ENCODE measurements at regions of chr17 and their contacts with region 1.

Region 1: GRCh38 chr17:19641687-19642372 is 6.7 kb upstream of the ALDH3A2 start:
- DNase-seq: peak; percentile 77
- H3K4me3 Mint-ChIP-seq: no peak overlapping the region
- H3K27ac Mint-ChIP-seq: no peak overlapping the region
- H3K4me1 Mint-ChIP-seq: peaks cover 36% of the 10 kb centered on the region
- H3K27me3 Mint-ChIP-seq: no peaks in the 10 kb centered on the region
- CTCF ChIP-seq: no peak

Region 2: DNA sequence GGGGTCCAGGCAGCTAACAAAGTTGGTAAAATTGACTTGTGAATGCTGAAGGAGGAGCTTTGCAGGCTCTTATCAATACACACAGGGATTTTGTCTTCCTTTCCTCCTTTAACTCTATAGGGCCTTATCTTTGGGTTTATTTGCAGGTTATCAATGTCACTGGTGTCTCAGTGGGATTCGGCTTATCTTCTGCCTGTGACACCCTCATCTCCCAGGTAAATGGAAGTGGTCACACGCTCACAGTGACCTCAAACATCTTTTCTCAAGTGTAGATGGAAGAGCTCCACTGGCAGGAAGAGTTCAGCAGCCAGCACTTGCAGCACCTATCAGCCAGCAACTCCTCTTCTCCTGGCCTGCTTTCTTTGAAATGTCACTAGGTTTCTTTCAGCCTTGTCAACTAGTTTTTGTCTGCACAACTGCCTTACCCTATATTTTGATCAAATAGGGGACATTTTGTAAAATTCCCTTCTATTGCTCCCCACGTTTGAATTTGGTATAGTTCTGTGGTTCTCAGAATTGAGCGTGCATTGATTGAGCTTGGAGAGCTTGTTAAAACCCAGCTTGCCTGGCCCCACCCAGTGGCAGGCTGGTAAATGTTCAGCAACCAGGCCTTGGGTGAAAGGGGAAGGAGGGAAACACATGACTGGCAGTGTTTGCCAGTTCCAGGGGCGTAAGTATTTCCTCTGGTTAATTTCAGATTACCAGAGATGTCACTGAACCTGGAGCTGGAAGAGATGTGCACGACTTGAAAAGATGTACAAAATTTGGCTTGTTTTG is 95.4 kb before region 1 on chr17:
- CTCF ChIA-PET with region 1: no interaction called
- POLR2A ChIA-PET with region 1: no interaction called
- intact Hi-C with region 1: no loop called
- DNase-seq: no peak
- H3K4me3 Mint-ChIP-seq: no peak overlapping the region
- H3K27ac Mint-ChIP-seq: no peak overlapping the region
- H3K4me1 Mint-ChIP-seq: no peaks in the 10 kb centered on the region
- H3K27me3 Mint-ChIP-seq: no peaks in the 10 kb centered on the region
- CTCF ChIP-seq: no peak

Region 3: GRCh38 chr17:19619705-19620325 is 22.0 kb before region 1 on chr17:
- CTCF ChIA-PET with region 1: no interaction called
- POLR2A ChIA-PET with region 1: no interaction called
- intact Hi-C with region 1: no loop called
- DNase-seq: no peak
- H3K4me3 Mint-ChIP-seq: no peak overlapping the region
- H3K27ac Mint-ChIP-seq: no peak overlapping the region
- H3K4me1 Mint-ChIP-seq: no peaks in the 10 kb centered on the region
- H3K27me3 Mint-ChIP-seq: no peaks in the 10 kb centered on the region
- CTCF ChIP-seq: no peak

Region 4: GRCh38 chr17:19630661-19631060 is 11.2 kb before region 1 on chr17:
- CTCF ChIA-PET with region 1: interaction called, 11 read pairs
- POLR2A ChIA-PET with region 1: no interaction called
- intact Hi-C with region 1: no loop called
- DNase-seq: peak; percentile 11
- H3K4me3 Mint-ChIP-seq: no peak overlapping the region
- H3K27ac Mint-ChIP-seq: no peak overlapping the region
- H3K4me1 Mint-ChIP-seq: peaks cover 16% of the 10 kb centered on the region
- H3K27me3 Mint-ChIP-seq: no peaks in the 10 kb centered on the region
- CTCF ChIP-seq: no peak